ENCODE measurements at regions of chr12 and their contacts with region 1.

Region 1: GRCh38 chr12:109385339-109386067 is 37.8 kb downstream of the MYO1H start:
- DNase-seq: peak in 1 of 2 donors; percentile 47
- ATAC-seq: peak in 1 of 3 donors; percentile 38
- H3K4me3 ChIP-seq: no peak overlapping the region
- H3K4me3 Mint-ChIP-seq: no peak overlapping the region
- H3K27ac ChIP-seq: no peak overlapping the region
- H3K27ac Mint-ChIP-seq: no peak overlapping the region
- H3K4me1 ChIP-seq: no peaks in the 10 kb centered on the region
- H3K4me1 Mint-ChIP-seq: no peaks in the 10 kb centered on the region
- H3K27me3 ChIP-seq: peaks cover 2% of the 10 kb centered on the region
- H3K27me3 Mint-ChIP-seq: peaks cover 0 to 26% of the 10 kb centered on the region in 2 donors
- CTCF ChIP-seq: peak; percentile 57

Region 2: DNA sequence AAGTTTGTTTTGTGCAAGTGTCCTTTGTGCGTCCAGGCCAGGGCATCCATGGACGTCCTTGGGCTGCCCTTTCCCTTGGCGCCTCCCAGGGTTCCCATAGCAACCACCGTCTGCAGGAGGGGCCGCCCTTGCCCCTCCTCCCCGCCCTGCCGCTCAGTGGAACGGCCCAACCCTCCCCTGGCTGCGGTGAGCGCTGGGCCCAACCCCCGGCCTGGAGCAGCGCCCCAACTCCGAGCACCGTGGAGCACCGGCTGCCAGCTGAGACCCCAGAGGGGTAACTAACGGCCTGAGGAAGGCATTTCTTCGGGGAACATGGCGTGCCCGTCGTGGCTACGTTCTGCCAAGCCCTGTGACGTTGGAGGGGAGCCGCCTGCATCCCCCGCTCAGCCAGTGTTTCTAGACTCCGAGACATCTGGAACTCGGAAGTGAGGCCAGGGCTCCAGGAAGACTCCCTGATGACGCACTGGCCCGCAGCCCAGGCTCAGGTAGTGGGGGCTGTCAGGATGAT is 274.5 kb before region 1 on chr12:
- intact Hi-C with region 1: loop called (anchors 2 kb)
- DNase-seq: peak in 1 of 2 donors; percentile 71
- ATAC-seq: peak; percentile 61 to 74 (median 64)
- H3K4me3 ChIP-seq: peak overlapping the region; percentile 44
- H3K4me3 Mint-ChIP-seq: peak overlapping the region; percentile 60
- H3K27ac ChIP-seq: peak overlapping the region; percentile 55
- H3K27ac Mint-ChIP-seq: peak overlapping the region in 1 of 2 donors; percentile 29
- H3K4me1 ChIP-seq: no peaks in the 10 kb centered on the region
- H3K4me1 Mint-ChIP-seq: peaks cover 0 to 9% of the 10 kb centered on the region in 2 donors
- H3K27me3 ChIP-seq: no peaks in the 10 kb centered on the region
- H3K27me3 Mint-ChIP-seq: no peaks in the 10 kb centered on the region
- CTCF ChIP-seq: no peak

Region 3: GRCh38 chr12:109264095-109264942 is 121.2 kb before region 1 on chr12:
- intact Hi-C with region 1: loop called (anchors 5 kb)
- DNase-seq: peak in 1 of 2 donors; percentile 52
- ATAC-seq: peak in 1 of 3 donors; percentile 31
- H3K4me3 ChIP-seq: no peak overlapping the region
- H3K4me3 Mint-ChIP-seq: no peak overlapping the region
- H3K27ac ChIP-seq: no peak overlapping the region
- H3K27ac Mint-ChIP-seq: no peak overlapping the region
- H3K4me1 ChIP-seq: no peaks in the 10 kb centered on the region
- H3K4me1 Mint-ChIP-seq: no peaks in the 10 kb centered on the region
- H3K27me3 ChIP-seq: no peaks in the 10 kb centered on the region
- H3K27me3 Mint-ChIP-seq: no peaks in the 10 kb centered on the region
- CTCF ChIP-seq: peak; percentile 27

Measured in natural killer cell (primary cell).